Right ventricle myocardium inferior (tissue), 1 donor: ENCODE measurements at regions of chr17 and their contacts with region 1.

Region 1: GRCh38 chr17:3683054-3683511 is 12.9 kb downstream of the P2RX5 start:
- DNase-seq: peak; percentile 59
- ATAC-seq: peak; percentile 50

Region 2: DNA sequence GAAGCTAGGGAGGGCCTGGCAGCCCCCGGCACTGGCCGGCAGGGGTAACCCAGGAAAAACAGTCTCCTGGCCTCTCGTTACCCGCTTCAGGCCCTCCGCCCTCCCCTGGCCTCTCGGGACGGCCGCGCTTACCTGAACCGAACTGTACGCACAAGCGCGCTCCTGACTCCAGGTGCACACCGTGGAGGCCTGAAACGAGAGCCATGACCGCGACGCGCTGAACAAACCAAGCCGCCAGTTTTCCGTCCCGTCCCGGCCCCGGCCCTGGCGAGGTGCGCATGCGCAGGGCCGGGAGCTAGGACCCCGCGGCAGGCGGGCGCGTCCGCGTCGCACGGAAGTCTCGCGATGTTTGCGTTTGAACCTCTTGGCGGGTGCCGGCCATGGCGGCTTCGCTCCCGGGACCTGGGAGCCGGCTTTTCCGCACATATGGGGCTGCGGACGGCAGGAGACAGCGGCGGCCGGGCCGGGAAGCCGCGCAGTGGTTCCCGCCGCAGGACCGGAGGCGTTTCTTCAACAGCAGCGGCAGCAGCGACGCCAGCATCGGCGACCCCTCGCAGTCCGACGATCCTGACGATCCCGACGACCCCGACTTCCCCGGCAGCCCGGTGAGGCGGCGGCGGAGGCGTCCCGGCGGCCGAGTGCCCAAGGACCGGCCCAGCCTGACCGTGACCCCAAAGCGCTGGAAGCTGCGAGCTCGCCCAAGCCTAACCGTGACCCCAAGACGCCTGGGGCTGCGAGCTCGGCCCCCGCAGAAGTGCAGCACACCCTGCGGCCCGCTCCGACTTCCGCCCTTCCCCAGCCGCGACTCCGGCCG is 40.7 kb after region 1 on chr17 and contains the start of gene HASPIN:
- intact Hi-C with region 1: loop called (anchors 5 kb)
- DNase-seq: peak; percentile 95
- ATAC-seq: peak; percentile 95
- total RNA-seq, gene HASPIN: 0.22 TPM